Vagina (tissue), 2 donors: ENCODE measurements at regions of chr5 and their contacts with region 1.

Region 1: DNA sequence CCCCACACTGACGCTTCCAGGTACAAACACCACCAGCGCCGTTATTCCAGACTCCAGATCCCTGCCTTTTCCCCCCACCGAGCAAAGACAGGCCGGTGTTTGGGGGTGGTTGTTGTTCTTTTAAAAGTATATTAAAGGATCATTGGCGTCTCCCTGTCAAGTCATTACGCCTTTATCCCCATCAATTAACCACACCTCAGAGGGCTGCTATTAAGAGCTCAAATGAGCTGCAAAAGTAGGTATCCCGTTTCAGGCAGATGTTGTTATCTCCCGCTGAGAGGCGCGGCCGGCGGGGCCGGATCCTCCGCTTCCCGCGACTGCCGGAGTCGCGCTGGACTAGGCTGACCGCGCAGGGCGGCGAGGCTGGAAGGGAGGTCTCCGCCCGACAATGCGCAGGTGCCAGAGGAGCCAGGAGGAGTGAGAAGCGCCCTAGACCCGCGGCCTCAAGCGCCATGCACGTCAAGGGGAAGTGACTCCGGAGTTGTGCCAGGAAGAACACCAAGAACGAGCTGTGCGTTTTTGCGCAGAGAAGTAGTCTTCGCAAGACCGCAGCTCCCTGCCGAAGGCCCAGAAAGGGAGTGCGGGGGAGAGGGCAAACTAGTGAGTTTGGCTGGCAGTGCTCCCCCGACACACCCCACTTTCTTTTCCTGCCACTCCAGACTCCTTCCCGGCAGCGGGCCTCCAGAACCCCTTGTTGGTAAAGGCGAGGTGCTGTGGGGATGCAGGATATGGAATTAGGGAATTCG is 8.2 kb downstream of the NR2F1-AS1 start:
- DNase-seq: peak in 1 of 2 donors; percentile 83
- H3K4me3 ChIP-seq: peak overlapping the region; percentile 17 to 25
- H3K27ac ChIP-seq: peak overlapping the region; percentile 28
- H3K4me1 ChIP-seq: peaks cover 9% of the 10 kb centered on the region
- H3K27me3 ChIP-seq: no peaks in the 10 kb centered on the region
- CTCF ChIP-seq: no peak
- POLR2A ChIP-seq: no peak

Region 2: GRCh38 chr5:93532370-93532769 is 40.4 kb before region 1 on chr5:
- intact Hi-C with region 1: loop called (anchors 2 kb)
- DNase-seq: peak in 1 of 2 donors; percentile 93
- H3K4me3 ChIP-seq: no peak overlapping the region
- H3K27ac ChIP-seq: peak overlapping the region; percentile 36
- H3K4me1 ChIP-seq: peaks cover 8% of the 10 kb centered on the region
- H3K27me3 ChIP-seq: no peaks in the 10 kb centered on the region
- CTCF ChIP-seq: no peak
- POLR2A ChIP-seq: no peak

Region 3: DNA sequence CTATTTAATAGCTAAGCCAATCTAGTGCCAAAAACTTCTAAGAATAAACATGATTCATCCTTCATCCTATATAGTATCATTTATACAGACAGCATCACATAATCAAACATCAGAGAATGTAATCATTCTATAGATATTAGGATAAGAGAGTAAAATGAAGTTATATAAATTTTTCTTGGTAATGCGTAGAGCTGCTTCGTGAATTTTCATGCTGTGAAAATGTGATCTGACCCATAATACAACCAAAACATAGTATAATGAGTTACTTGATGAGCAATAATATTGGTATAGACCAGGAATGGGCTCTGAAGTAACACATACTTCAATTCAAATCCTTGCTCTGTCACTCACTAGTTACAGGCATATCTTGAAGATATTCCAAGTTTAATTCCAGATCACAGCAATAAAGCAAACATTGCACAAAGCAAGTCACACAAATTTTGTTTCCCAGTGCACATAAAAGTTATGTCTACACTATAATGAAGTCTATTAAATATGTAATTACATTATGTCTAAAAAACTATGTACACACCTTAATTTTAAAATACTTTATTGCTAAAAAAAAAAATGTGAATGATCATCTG is 15.7 kb before region 1 on chr5:
- intact Hi-C with region 1: no loop called
- DNase-seq: no peak
- H3K4me3 ChIP-seq: no peak overlapping the region
- H3K27ac ChIP-seq: no peak overlapping the region
- H3K4me1 ChIP-seq: no peaks in the 10 kb centered on the region
- H3K27me3 ChIP-seq: no peaks in the 10 kb centered on the region
- CTCF ChIP-seq: no peak
- POLR2A ChIP-seq: no peak

Region 4: DNA sequence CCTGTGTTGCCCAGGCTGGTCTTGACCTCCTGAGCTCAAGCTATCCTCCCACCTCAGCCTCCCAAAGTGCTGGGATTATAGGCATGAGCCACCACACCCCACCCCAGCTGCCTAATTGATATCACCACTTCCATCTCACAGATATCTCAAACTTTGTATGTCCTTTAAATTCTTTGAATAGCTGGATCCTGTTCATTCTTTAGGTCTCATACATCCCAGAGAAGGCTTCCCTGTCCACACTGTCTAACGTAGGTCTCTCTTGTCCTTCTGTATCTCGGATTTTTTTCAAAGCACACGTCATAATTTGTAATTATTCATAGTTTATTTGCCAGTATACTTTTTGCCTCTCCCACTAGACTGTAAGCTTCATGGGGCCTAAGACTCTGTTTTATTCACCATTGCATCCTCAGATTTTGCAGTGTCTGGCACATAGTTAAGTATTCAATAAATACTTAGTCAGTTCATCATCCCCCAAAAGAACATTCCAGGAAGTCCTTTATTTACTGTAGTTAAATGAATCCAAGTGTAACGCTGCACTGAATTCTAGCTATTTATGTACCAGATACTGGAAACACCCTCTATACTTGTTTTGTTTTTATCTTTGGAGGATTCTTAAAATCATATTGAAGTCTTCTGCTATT is 1992.6 kb after region 1 on chr5:
- intact Hi-C with region 1: no loop called
- DNase-seq: no peak
- H3K4me3 ChIP-seq: no peak overlapping the region
- H3K27ac ChIP-seq: no peak overlapping the region
- H3K4me1 ChIP-seq: no peaks in the 10 kb centered on the region
- H3K27me3 ChIP-seq: no peaks in the 10 kb centered on the region
- CTCF ChIP-seq: no peak
- POLR2A ChIP-seq: no peak